ENCODE measurements at regions of chr19 and their contacts with region 1.

Region 1: DNA sequence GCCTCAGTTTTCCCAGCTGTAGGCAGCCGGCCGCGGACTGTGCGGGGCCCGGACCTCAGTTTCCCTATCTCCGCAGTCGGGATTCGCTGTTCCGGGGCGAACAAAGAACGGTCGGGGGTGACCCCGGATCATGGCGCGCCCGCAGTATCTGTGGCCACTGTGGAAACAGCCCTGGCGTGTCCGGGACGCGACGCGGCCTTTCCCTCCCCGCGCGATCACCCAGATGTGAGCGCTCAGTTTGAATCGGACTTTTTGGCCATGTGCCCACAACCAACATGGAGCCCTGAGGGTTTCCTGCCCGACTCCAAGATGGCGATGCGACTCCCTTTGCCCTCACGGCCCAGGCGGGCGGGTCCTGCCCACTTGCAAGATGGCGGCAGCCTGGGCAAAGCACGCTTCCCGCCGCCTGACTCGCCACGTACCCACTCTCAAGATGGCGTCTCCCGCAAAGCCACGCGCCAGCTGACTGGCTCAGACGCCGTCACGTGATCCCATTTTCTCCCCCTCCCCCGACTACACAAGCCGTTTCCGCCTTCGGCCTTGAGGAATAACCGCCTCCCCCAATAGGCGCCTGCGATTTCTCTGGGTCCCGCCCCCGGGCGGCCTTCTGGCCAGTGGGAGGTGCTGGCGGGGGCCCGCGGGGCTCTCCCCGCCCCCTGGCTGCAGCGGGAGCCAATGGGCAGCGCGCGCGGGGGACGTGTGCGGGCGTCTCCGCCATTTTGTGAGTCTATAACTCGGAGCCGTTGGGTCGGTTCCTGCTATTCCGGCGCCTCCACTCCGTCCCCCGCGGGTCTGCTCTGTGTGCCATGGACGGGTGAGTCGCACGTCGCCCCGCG is at the start of gene PTBP1:
- DNase-seq: peak; percentile 99
- H3K4me3 Mint-ChIP-seq: peak within 1 kb of the TSS; percentile 92
- H3K27ac Mint-ChIP-seq: peak within 1 kb of the TSS; percentile 91
- H3K4me1 Mint-ChIP-seq: peaks cover 19% of the 10 kb centered on the region
- H3K27me3 Mint-ChIP-seq: no peaks in the 10 kb centered on the region
- total RNA-seq, gene PTBP1: 735 and 829 TPM in 2 replicates

Region 2: GRCh38 chr19:506404-507285 is 290.3 kb before region 1 on chr19:
- intact Hi-C with region 1: loop called (anchors 2 kb)
- DNase-seq: peak; percentile 92
- H3K4me3 Mint-ChIP-seq: peak overlapping the region; percentile 98
- H3K27ac Mint-ChIP-seq: peak overlapping the region; percentile 100
- H3K4me1 Mint-ChIP-seq: peaks cover 41% of the 10 kb centered on the region
- H3K27me3 Mint-ChIP-seq: no peaks in the 10 kb centered on the region

Region 3: GRCh38 chr19:633068-633785 is 163.7 kb before region 1 on chr19 and contains the start of gene POLRMT:
- intact Hi-C with region 1: loop called (anchors 1 kb)
- DNase-seq: peak; percentile 96
- H3K4me3 Mint-ChIP-seq: peak within 1 kb of the TSS; percentile 96
- H3K27ac Mint-ChIP-seq: peak within 1 kb of the TSS; percentile 95
- H3K4me1 Mint-ChIP-seq: peaks cover 6% of the 10 kb centered on the region
- H3K27me3 Mint-ChIP-seq: no peaks in the 10 kb centered on the region
- total RNA-seq, gene POLRMT: 103 and 104 TPM in 2 replicates

Region 4: DNA sequence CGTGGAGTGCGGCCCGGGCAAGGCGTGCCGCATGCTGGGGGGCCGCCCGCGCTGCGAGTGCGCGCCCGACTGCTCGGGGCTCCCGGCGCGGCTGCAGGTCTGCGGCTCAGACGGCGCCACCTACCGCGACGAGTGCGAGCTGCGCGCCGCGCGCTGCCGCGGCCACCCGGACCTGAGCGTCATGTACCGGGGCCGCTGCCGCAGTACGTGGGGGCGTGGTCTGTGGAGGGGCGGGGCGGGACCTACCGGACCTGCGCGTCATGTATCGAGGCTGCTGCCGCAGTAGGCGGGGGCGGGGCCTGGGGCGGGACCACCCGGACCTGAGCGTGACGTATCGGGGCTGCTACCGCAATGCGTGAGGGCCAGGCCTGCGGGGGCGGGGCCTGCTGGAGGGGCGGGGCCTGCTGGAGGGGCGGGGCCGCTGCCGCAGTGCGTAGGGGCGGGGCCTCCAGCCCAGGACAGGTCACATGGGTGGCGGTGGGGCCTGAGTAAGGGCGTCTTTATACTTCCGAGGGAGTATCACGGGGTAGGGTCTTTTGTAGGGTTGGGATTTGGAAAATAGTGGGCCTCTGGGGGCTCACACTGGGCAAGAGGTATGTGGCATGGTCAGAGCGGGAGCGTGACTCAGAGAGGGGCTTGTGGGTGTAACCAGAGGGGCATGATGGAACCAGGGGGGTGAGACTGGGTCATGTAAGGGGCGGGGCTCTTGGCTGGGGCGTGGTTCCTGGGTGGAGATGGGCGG is 116.5 kb before region 1 on chr19:
- intact Hi-C with region 1: loop called (anchors 1 kb)
- DNase-seq: peak; percentile 95
- H3K4me3 Mint-ChIP-seq: peak overlapping the region; percentile 86
- H3K27ac Mint-ChIP-seq: peak overlapping the region; percentile 99
- H3K4me1 Mint-ChIP-seq: no peaks in the 10 kb centered on the region
- H3K27me3 Mint-ChIP-seq: peaks cover 5% of the 10 kb centered on the region

Region 5: GRCh38 chr19:920051-920864 is 123.3 kb after region 1 on chr19:
- intact Hi-C with region 1: loop called (anchors 2 kb)
- DNase-seq: peak; percentile 56
- H3K4me3 Mint-ChIP-seq: peak overlapping the region; percentile 82
- H3K27ac Mint-ChIP-seq: peak overlapping the region; percentile 88
- H3K4me1 Mint-ChIP-seq: peaks cover 16% of the 10 kb centered on the region
- H3K27me3 Mint-ChIP-seq: peaks cover 4% of the 10 kb centered on the region

Region 6: DNA sequence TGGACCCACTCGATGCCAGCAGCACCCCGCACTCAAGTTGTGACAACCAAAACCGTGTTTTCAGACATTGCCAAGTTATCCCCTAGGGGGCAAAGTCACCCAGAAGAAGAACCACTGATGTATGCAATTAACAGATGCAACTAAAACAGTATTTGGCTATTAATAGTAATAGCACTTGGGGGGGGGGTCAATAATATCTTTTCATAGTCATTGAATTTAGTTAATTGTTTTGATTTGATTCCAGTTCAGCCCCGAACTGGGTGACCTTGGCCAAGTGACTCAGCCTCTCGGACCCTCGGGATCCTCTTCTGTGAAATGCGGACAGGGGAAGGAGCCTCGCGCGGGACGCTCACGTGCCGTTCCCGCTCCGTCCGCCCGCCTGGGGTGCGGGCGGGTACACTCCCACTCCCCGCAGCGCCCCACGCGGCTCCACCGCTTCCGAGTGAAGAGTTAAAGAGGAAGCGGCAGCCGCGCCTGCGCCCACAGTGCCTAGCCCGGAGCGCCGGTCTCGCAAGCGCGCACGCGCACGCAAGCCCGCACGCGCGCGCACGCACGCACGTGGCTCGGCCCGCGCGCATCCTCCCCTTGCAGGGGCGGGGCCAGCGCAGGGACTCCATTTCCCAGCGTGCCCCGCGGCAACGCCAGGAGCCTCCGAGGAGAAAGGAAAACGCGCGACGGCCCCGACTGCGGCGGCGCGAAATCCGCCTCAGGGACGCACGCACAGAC is 610.0 kb after region 1 on chr19:
- intact Hi-C with region 1: loop called (anchors 1 kb)
- DNase-seq: peak; percentile 100
- H3K4me3 Mint-ChIP-seq: peak overlapping the region; percentile 76
- H3K27ac Mint-ChIP-seq: peak overlapping the region; percentile 83
- H3K4me1 Mint-ChIP-seq: peaks cover 33% of the 10 kb centered on the region
- H3K27me3 Mint-ChIP-seq: peaks cover 7% of the 10 kb centered on the region